HEK293 (cell line): ENCODE measurements at regions of chr13 and their contacts with region 1.

Region 1: GRCh38 chr13:31073859-31074718 is 87.6 kb downstream of the HSPH1 start:
- H3K4me3 ChIP-seq: no peak overlapping the region
- H3K27ac ChIP-seq: no peak overlapping the region
- H3K4me1 ChIP-seq: no peaks in the 10 kb centered on the region
- CTCF ChIP-seq: no peak

Region 2: DNA sequence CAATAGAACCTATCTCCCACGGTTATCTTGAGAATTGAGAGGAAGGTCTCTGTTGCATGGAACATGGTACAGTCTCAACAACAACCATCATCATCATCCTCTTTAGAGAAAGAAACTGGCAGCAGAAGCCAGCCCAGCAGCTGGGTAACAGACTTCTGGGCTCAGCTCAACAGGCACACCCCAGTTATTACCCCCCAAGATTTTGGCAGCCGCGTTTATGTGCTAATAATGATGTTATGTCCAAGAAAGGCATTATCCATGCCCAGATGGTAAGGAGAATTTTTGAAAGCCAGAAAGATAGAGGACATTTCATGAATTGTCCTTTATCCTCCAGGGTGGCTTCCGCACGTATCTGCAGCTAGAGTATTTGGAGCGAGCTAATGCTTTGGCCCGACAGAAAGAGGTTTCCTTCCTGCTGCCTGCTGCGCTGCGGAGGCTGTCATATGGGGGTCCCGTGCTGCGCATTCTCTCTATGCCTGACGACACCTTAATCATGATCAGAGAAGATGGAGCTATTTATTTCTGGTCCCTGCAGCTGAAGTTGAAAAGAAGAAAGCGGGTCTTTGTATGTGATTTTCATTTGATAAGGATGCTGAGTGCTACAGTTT is 51.7 kb before region 1 on chr13:
- CTCF ChIA-PET with region 1: interaction called, 3 read pairs
- POLR2A ChIA-PET with region 1: interaction called, 10 read pairs
- H3K4me3 ChIP-seq: no peak overlapping the region
- H3K27ac ChIP-seq: no peak overlapping the region
- H3K4me1 ChIP-seq: no peaks in the 10 kb centered on the region
- CTCF ChIP-seq: no peak